OCI-LY7 (cell line): ENCODE measurements at regions of chr11 and their contacts with region 1.

Region 1: DNA sequence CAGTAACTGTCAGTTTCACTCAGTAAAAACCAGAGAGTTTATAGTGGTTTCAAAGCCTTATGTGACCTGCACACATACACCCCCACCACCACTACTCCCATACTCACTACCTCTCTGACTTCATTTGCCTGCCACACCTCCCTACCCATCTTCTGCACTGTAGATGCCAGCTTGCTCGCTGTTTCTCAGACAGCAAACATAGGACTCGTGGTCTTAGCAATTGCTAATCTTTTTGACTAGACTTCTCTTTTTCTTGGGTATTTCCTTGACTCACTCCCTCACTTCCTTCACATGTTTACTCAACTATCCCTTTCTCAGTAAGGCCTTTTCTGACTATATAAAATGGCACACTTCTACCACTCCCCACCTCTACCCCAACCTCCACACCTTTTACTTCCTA is 27.8 kb downstream of the CEP295 start:
- DNase-seq: no peak
- H3K4me3 ChIP-seq: no peak overlapping the region
- H3K27ac ChIP-seq: no peak overlapping the region
- H3K4me1 ChIP-seq: no peaks in the 10 kb centered on the region
- CTCF ChIP-seq: no peak

Region 2: GRCh38 chr11:93727985-93728791 is 38.9 kb after region 1 on chr11:
- CTCF ChIA-PET with region 1: no interaction called
- POLR2A ChIA-PET with region 1: interaction called, 3 read pairs
- intact Hi-C with region 1: loop called (anchors 5 kb)
- DNase-seq: peak; percentile 11
- H3K4me3 ChIP-seq: no peak overlapping the region
- H3K27ac ChIP-seq: no peak overlapping the region
- H3K4me1 ChIP-seq: peaks cover 9% of the 10 kb centered on the region
- CTCF ChIP-seq: no peak

Region 3: DNA sequence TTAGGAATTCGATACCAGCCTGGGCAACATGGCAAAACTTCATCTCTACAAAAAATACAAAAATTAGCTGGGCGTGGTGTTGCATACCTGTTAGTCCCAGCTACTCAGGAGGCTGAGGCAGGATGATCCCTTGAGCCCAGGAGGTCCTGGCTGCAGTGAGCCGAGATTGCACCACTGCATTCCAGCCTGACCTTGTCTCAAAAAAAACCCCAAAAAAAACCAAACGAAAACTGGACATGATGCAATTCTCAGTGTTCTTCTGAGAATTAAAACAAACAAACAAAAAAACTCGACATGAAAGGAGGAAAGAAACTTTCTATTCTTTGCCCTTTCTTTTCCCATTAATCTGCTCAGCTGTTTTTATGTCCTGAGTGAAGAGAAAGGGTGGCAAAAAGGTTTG is 102.3 kb after region 1 on chr11:
- CTCF ChIA-PET with region 1: no interaction called
- POLR2A ChIA-PET with region 1: no interaction called
- intact Hi-C with region 1: loop called (anchors 5 kb)
- DNase-seq: no peak
- H3K4me3 ChIP-seq: no peak overlapping the region
- H3K27ac ChIP-seq: no peak overlapping the region
- H3K4me1 ChIP-seq: peaks cover 12% of the 10 kb centered on the region
- CTCF ChIP-seq: no peak

Region 4: DNA sequence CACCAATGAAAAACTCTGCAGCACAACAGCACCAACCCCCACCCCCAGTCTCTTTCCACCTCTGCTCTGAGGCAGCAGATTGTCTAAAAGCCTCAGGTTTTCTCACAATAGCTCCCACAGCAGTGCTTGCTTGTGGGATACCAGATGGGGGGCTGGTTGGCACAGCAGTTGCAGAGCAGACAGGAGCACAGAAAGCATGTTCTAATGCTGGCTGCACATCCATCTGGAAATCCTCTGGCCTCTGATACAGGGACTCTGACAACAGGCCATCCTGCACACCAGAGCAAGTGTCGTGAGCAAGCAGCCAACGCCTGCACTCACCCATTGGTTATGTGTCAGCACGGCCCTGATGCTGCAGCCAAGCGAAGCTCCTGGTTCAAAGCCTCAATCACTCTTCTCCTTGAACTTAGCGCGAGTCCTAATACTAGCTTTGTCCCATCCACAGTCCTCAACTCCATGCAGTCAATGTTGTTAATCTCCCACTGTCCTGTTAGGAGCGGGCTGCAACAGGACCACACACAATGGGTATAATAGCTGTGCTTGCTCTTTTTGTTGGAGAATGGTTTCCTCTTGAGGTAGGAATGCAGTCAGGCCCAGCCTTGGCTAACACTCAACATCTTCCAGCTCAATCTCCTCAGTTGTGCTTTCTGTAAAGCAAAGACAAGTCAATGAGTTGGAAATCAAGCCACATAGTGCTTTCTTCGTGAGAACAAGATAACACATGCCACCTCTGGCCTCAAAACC is 130.9 kb after region 1 on chr11:
- CTCF ChIA-PET with region 1: no interaction called
- POLR2A ChIA-PET with region 1: no interaction called
- intact Hi-C with region 1: no loop called
- DNase-seq: no peak
- H3K4me3 ChIP-seq: no peak overlapping the region
- H3K27ac ChIP-seq: no peak overlapping the region
- H3K4me1 ChIP-seq: no peaks in the 10 kb centered on the region
- CTCF ChIP-seq: no peak

Region 5: DNA sequence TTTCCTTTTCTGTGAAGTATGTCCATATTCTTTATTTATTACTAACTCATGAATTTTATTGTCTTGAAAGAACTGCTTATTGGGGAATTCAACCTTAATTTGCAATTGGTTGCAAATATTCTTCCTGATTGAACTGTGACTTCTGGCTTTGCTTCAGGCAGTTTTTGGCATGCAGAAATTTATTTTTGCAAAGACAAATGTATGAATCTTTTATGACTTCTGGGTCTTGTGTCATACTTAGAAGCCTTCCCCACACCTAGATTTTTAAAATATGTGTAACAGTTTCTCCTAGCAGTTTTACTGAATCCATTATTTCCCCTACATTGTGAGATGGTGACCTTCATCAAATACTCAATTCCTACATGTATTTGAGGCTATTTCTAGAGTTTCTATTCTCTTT is 792.1 kb after region 1 on chr11:
- CTCF ChIA-PET with region 1: no interaction called
- POLR2A ChIA-PET with region 1: no interaction called
- intact Hi-C with region 1: loop called (anchors 10 kb)
- DNase-seq: no peak
- H3K4me3 ChIP-seq: no peak overlapping the region
- H3K27ac ChIP-seq: no peak overlapping the region
- H3K4me1 ChIP-seq: no peaks in the 10 kb centered on the region
- CTCF ChIP-seq: no peak